GM10248 (cell line): ENCODE measurements at regions of chr16 and their contacts with region 1.

Region 1: GRCh38 chr16:3525951-3526350 is 25.1 kb downstream of the CLUAP1 start:
- DNase-seq: no peak
- CTCF ChIP-seq: no peak

Region 2: DNA sequence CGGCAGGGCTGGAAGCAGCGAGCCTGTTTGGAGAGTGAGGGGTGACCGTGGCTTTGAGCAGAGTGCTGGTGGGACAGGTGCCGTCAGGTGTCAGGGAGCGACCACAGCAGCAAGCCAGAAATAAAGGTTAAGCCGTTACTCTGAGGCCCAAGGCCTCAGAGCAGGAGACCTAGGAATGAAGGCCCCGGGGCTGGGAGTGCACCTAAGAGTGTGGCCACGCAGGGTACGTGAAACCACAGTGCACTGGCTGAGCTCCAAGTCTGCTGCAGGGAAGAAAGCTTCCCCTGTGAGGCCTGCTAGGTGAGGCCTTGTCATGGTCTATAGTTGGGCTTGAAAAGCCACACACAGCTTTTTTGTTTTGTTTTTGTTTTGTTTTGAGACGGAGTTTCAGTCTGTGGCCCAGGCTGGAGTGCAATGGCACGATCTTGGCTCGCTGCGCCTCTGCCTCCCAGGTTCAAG is 16.5 kb before region 1 on chr16:
- CTCF ChIA-PET with region 1: interaction called, 15 read pairs
- POLR2A ChIA-PET with region 1: no interaction called
- DNase-seq: no peak
- CTCF ChIP-seq: no peak

Region 3: DNA sequence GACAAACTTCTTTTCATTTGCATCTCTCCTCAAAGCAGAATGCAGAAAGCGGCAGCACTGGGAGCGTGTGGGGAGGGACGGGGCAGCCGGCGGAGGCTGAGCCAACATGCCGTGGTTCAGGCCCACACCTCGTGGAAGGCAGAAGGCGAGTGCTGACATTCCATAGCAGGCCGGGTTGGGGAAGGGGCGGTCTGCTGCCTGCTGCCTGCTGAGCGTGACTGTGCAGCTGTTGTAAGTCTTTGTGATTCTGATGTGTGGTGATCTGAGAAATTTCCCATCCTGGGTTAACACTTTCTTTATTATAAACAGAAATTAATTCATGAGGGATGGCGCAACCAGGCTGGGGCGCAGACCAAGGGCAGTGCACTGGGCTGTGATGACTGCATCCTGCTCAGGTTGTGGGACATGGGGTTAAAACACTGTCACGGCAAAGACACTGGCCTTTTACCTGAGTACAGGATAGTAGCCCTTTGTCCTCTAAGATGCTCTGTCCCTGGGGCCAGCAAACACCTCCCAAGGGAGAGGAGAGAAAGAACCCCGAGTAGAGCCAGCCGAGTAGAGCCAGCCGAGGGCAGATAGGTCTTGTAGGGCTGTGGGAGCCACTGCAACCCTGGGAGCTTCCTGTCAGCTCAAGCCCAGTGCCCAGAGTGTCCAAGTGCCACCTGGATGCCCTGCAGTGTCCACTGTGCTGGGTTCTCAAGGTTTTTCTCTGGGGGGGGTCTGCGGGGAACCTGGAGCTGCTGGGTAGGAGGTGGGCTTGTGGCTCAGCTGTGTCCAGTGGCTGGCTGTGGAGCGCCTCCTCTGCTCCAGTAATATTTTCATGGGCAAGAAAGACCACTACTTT is 119.8 kb after region 1 on chr16:
- CTCF ChIA-PET with region 1: no interaction called
- POLR2A ChIA-PET with region 1: no interaction called
- DNase-seq: peak; percentile 16
- CTCF ChIP-seq: no peak